Panc1 (cell line): ENCODE measurements at regions of chr17 and their contacts with region 1.

Region 1: DNA sequence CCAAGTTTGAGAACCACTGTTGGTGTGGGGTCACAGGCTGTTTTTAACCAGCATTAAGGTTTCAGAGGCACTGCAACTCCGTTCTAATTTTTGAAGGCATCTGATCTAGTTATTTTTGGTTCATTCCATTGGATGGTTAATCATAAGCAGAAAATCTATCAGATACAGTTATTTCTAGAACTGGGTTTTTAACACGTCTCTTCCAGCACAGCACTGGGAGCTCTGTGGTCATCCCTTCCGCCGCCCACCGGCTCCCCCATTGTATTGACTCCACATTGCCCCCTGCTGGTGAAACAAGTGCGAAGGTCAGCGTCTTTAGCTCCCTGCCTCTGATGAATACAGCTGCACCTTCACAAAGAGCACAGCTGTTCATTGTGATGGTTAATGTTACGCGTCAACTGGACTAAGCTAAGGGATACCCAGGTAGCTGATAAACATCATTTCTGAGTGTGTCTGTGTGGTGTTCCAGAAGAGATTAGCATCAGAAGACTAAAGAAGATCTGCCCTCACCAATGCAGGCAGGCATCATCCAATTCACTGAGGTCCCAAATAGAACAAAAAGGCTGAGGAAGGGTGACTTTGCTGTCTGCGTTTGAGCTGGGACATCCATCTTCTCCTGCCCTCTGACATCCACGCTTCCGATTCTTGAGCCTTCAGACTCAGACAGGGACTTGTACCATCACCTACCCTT is 8.5 kb downstream of the CCL18 start:
- DNase-seq: peak; percentile 22
- ATAC-seq: peak; percentile 90
- H3K4me3 ChIP-seq: no peak overlapping the region
- H3K27ac ChIP-seq: no peak overlapping the region
- H3K4me1 ChIP-seq: no peaks in the 10 kb centered on the region
- H3K27me3 ChIP-seq: peaks cover 7% of the 10 kb centered on the region; the same call in 1 of the 2 replicates
- CTCF ChIP-seq: peak; percentile 84

Region 2: GRCh38 chr17:35969558-35970380 is 102.8 kb before region 1 on chr17:
- CTCF ChIA-PET with region 1: interaction called, 18 read pairs
- POLR2A ChIA-PET with region 1: no interaction called
- in situ Hi-C with region 1: no loop called
- intact Hi-C with region 1: no loop called
- DNase-seq: peak; percentile 67
- ATAC-seq: peak; percentile 92
- H3K4me3 ChIP-seq: no peak overlapping the region
- H3K27ac ChIP-seq: no peak overlapping the region
- H3K4me1 ChIP-seq: peaks cover 5% of the 10 kb centered on the region; the same call in 1 of the 2 replicates
- H3K27me3 ChIP-seq: no peaks in the 10 kb centered on the region; the same call in 1 of the 2 replicates
- CTCF ChIP-seq: peak; percentile 88

Region 3: GRCh38 chr17:35981908-35982330 is 90.7 kb before region 1 on chr17:
- CTCF ChIA-PET with region 1: interaction called, 4 read pairs
- POLR2A ChIA-PET with region 1: no interaction called
- in situ Hi-C with region 1: no loop called
- intact Hi-C with region 1: loop called (anchors 2 kb)
- DNase-seq: no peak
- ATAC-seq: 0 out of 2 replicates have a peak, but pooled peaks have one; percentile 42
- H3K4me3 ChIP-seq: no peak overlapping the region
- H3K27ac ChIP-seq: no peak overlapping the region
- H3K4me1 ChIP-seq: no peaks in the 10 kb centered on the region
- H3K27me3 ChIP-seq: no peaks in the 10 kb centered on the region; the same call in 1 of the 2 replicates
- CTCF ChIP-seq: no peak; the same call in 1 of the 2 replicates